ENCODE measurements at regions of chr4 and their contacts with region 1.

Region 1: GRCh38 chr4:55948726-55949474 is at the start of gene CEP135:
- DNase-seq: peak; percentile 83 to 96 (median 91)
- ATAC-seq: peak; percentile 68
- H3K4me3 ChIP-seq: peak within 1 kb of the TSS; percentile 74
- H3K4me3 Mint-ChIP-seq: peak within 1 kb of the TSS; percentile 90
- H3K27ac ChIP-seq: peak within 1 kb of the TSS; percentile 79 to 83
- H3K27ac Mint-ChIP-seq: peak within 1 kb of the TSS; percentile 96
- H3K4me1 ChIP-seq: peaks cover 26% of the 10 kb centered on the region
- H3K4me1 Mint-ChIP-seq: peaks cover 58% of the 10 kb centered on the region
- H3K27me3 ChIP-seq: no peaks in the 10 kb centered on the region
- H3K27me3 Mint-ChIP-seq: no peaks in the 10 kb centered on the region
- CTCF ChIP-seq: peak; percentile 95
- total RNA-seq, gene CEP135: 19.6 to 21.0 TPM

Region 2: GRCh38 chr4:55395529-55396307 is 553.2 kb before region 1 on chr4 and contains the start of gene TMEM165:
- CTCF ChIA-PET with region 1: no interaction called
- POLR2A ChIA-PET with region 1: interaction called, 3 read pairs
- intact Hi-C with region 1: loop called in 1 of 2 experiments (anchors 5 kb)
- DNase-seq: peak; percentile 77 to 94 (median 84)
- ATAC-seq: peak; percentile 93
- H3K4me3 ChIP-seq: peak within 1 kb of the TSS; percentile 79
- H3K4me3 Mint-ChIP-seq: peak within 1 kb of the TSS; percentile 97
- H3K27ac ChIP-seq: peak within 1 kb of the TSS; percentile 73 to 94
- H3K27ac Mint-ChIP-seq: peak within 1 kb of the TSS; percentile 89
- H3K4me1 ChIP-seq: peaks cover 34% of the 10 kb centered on the region
- H3K4me1 Mint-ChIP-seq: peaks cover 44% of the 10 kb centered on the region
- H3K27me3 ChIP-seq: no peaks in the 10 kb centered on the region
- H3K27me3 Mint-ChIP-seq: no peaks in the 10 kb centered on the region
- CTCF ChIP-seq: no peak
- total RNA-seq, gene TMEM165: 44.8 to 46.0 TPM

Region 3: DNA sequence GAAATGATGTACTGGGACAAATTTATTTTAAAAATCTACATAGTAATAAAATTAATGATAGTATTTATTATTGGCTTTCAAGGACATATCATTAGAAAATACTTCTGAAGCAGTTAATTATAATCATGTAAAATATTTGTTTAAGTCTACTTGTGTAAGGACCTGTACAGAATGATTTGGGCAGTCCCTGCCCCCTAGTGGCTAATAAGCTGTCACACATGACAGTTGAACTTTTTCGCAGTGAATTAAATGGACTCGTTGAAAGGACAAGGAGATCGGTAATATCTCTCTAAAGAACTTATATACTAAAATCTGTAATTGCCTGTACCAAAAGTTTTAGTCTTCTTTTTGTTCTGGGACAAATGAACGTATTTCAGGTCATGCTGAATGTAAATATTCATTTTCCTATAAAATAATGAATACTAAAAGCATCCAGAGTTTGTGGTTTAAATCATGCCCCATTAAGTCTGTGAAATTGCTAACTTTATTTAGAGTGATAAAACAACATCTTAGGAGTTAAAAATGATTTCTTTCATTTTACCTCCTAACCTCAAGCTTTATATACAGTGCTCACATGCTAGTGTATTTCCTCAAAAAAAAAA is 81.8 kb before region 1 on chr4:
- CTCF ChIA-PET with region 1: interaction called, 22 read pairs
- POLR2A ChIA-PET with region 1: interaction called, 7 read pairs
- intact Hi-C with region 1: no loop called
- DNase-seq: peak in 6 of 14 experiments; percentile 9 to 74 (median 50)
- ATAC-seq: peak; percentile 91
- H3K4me3 ChIP-seq: no peak overlapping the region
- H3K4me3 Mint-ChIP-seq: no peak overlapping the region
- H3K27ac ChIP-seq: no peak overlapping the region
- H3K27ac Mint-ChIP-seq: no peak overlapping the region
- H3K4me1 ChIP-seq: no peaks in the 10 kb centered on the region
- H3K4me1 Mint-ChIP-seq: peaks cover 17% of the 10 kb centered on the region
- H3K27me3 ChIP-seq: no peaks in the 10 kb centered on the region
- H3K27me3 Mint-ChIP-seq: no peaks in the 10 kb centered on the region
- CTCF ChIP-seq: peak; percentile 99

Region 4: DNA sequence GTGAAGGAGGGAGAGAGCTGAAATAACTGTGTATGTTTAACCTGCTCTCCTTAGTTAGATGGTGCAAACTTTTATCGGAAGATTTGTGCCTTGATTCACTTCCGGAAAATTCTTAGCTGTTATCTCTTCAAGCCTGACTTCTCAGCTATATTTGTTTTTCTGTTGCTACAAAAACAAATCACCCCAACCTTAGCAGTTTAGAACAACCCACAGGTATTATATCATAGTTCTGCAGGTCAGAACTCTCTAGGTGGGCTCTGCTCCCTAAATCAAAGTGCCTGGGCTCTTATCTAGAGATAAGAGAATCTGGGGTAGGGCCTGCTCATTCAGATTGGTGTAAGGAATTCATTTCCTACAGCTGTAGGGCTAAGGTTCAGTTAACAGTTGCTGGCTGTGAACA is 15.3 kb before region 1 on chr4:
- CTCF ChIA-PET with region 1: interaction called, 6 read pairs
- POLR2A ChIA-PET with region 1: interaction called, 10 read pairs
- intact Hi-C with region 1: no loop called
- DNase-seq: no peak
- ATAC-seq: no peak
- H3K4me3 ChIP-seq: no peak overlapping the region
- H3K4me3 Mint-ChIP-seq: no peak overlapping the region
- H3K27ac ChIP-seq: no peak overlapping the region
- H3K27ac Mint-ChIP-seq: no peak overlapping the region
- H3K4me1 ChIP-seq: no peaks in the 10 kb centered on the region
- H3K4me1 Mint-ChIP-seq: no peaks in the 10 kb centered on the region
- H3K27me3 ChIP-seq: no peaks in the 10 kb centered on the region
- H3K27me3 Mint-ChIP-seq: no peaks in the 10 kb centered on the region
- CTCF ChIP-seq: no peak

Region 5: GRCh38 chr4:56435306-56435926 is 486.5 kb after region 1 on chr4 and contains the start of gene PPAT:
- CTCF ChIA-PET with region 1: no interaction called
- POLR2A ChIA-PET with region 1: interaction called, 42 read pairs
- intact Hi-C with region 1: no loop called
- DNase-seq: peak; percentile 97 to 99 (median 99)
- ATAC-seq: peak; percentile 80
- H3K4me3 ChIP-seq: peak within 1 kb of the TSS; percentile 91
- H3K4me3 Mint-ChIP-seq: peak within 1 kb of the TSS; percentile 92
- H3K27ac ChIP-seq: peak within 1 kb of the TSS; percentile 59 to 91
- H3K27ac Mint-ChIP-seq: peak within 1 kb of the TSS; percentile 77
- H3K4me1 ChIP-seq: peaks cover 26% of the 10 kb centered on the region
- H3K4me1 Mint-ChIP-seq: peaks cover 41% of the 10 kb centered on the region
- H3K27me3 ChIP-seq: no peaks in the 10 kb centered on the region
- H3K27me3 Mint-ChIP-seq: no peaks in the 10 kb centered on the region
- CTCF ChIP-seq: peak; percentile 23
- total RNA-seq, gene PPAT: 4.7 to 6.3 TPM

Region 6: GRCh38 chr4:56843421-56843899 is 894.6 kb after region 1 on chr4:
- CTCF ChIA-PET with region 1: no interaction called
- POLR2A ChIA-PET with region 1: no interaction called
- intact Hi-C with region 1: loop called (anchors 5 kb)
- DNase-seq: no peak
- ATAC-seq: no peak
- H3K4me3 ChIP-seq: no peak overlapping the region
- H3K4me3 Mint-ChIP-seq: no peak overlapping the region
- H3K27ac ChIP-seq: no peak overlapping the region
- H3K27ac Mint-ChIP-seq: no peak overlapping the region
- H3K4me1 ChIP-seq: no peaks in the 10 kb centered on the region
- H3K4me1 Mint-ChIP-seq: no peaks in the 10 kb centered on the region
- H3K27me3 ChIP-seq: no peaks in the 10 kb centered on the region
- H3K27me3 Mint-ChIP-seq: no peaks in the 10 kb centered on the region
- CTCF ChIP-seq: no peak

Measured in CD4-positive, alpha-beta T cell (primary cell).